ENCODE measurements at regions of chr2 and their contacts with region 1.

Region 1: GRCh38 chr2:102063941-102064678 is 72.3 kb downstream of the IL1R2 start:
- DNase-seq: peak in 1 of 2 donors; percentile 98
- H3K4me3 ChIP-seq: peak overlapping the region in 1 of 2 donors; percentile 17
- H3K27ac ChIP-seq: peak overlapping the region; percentile 95
- H3K4me1 ChIP-seq: peaks cover 56% of the 10 kb centered on the region
- H3K27me3 ChIP-seq: no peaks in the 10 kb centered on the region
- CTCF ChIP-seq: no peak
- POLR2A ChIP-seq: no peak

Region 2: GRCh38 chr2:102020596-102021181 is 43.4 kb before region 1 on chr2:
- intact Hi-C with region 1: loop called (anchors 5 kb)
- DNase-seq: no peak
- H3K4me3 ChIP-seq: no peak overlapping the region
- H3K27ac ChIP-seq: peak overlapping the region; percentile 64
- H3K4me1 ChIP-seq: peaks cover 19% of the 10 kb centered on the region
- H3K27me3 ChIP-seq: no peaks in the 10 kb centered on the region
- CTCF ChIP-seq: peak; percentile 93 to 97 (median 97)
- POLR2A ChIP-seq: no peak

Region 3: GRCh38 chr2:102141970-102142828 is 78.1 kb after region 1 on chr2 and contains the start of gene IL1R1:
- intact Hi-C with region 1: loop called (anchors 5 kb)
- DNase-seq: no peak
- H3K4me3 ChIP-seq: peak within 1 kb of the TSS; percentile 65 to 81
- H3K27ac ChIP-seq: peak within 1 kb of the TSS; percentile 94
- H3K4me1 ChIP-seq: peaks cover 47% of the 10 kb centered on the region
- H3K27me3 ChIP-seq: no peaks in the 10 kb centered on the region
- CTCF ChIP-seq: no peak
- POLR2A ChIP-seq: peak in 1 of 2 donors; percentile 85
- total RNA-seq, gene IL1R1: 79.6 TPM

Measured in vagina (tissue), 2 donors.